ENCODE measurements at regions of chr2 and their contacts with region 1.

Region 1: DNA sequence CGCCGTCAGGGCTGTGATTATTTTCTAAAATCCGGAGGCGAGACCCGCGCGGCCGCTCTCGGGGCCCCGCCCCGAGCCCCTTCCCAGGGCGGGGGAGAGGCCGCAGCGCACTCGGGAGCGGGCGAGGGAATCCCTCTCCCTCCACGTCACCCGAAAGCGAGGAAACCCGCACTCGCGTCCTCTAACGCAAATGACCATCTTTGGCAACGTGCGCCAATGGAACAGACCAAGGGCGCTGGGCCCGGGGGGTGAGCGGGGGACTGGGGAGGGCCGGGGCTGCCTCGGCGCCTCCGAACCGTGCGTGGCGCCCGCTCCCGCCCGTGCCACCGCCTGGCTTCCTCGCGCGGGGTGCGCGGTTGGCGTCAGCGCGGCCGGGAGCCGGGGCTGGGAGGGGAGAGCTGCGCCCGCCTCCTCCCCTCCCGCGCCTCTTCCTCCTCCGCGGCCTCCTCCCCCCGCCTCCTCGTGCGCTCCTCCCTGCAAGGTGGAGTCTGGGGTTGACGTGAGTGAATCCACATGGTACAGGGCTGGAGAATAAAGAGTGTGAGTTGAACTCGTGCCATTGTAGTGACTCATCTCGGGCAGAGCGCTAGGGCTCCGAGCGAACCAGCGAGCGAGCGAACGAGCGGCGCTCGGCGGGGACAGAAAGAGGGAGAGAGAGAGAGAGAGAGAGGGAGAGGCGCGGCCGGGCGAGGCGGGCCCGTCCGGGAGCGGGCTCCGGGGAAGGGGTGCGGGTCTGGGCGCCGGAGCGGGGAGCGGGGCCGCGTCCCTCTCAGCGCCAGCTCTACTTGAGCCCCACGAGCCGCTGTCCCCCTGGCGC is at the start of gene FOSL2:
- DNase-seq: peak; percentile 99
- H3K4me3 ChIP-seq: peak within 1 kb of the TSS; percentile 74
- H3K27ac ChIP-seq: peak within 1 kb of the TSS; percentile 89
- H3K4me1 ChIP-seq: peaks cover 23% of the 10 kb centered on the region
- H3K27me3 ChIP-seq: no peaks in the 10 kb centered on the region
- CTCF ChIP-seq: no peak
- total RNA-seq, gene FOSL2: 5.3 and 12.2 TPM in 2 replicates

Region 2: GRCh38 chr2:27703638-27704341 is 688.7 kb before region 1 on chr2:
- CTCF ChIA-PET with region 1: no interaction called
- POLR2A ChIA-PET with region 1: no interaction called
- intact Hi-C with region 1: loop called (anchors 5 kb)
- DNase-seq: peak; percentile 88
- H3K4me3 ChIP-seq: no peak overlapping the region
- H3K27ac ChIP-seq: no peak overlapping the region
- H3K4me1 ChIP-seq: no peaks in the 10 kb centered on the region
- H3K27me3 ChIP-seq: no peaks in the 10 kb centered on the region
- CTCF ChIP-seq: peak; percentile 96

Region 3: GRCh38 chr2:27754138-27754588 is 638.3 kb before region 1 on chr2:
- CTCF ChIA-PET with region 1: interaction called, 4 read pairs
- POLR2A ChIA-PET with region 1: no interaction called
- intact Hi-C with region 1: loop called (anchors 1 kb)
- DNase-seq: peak; percentile 79
- H3K4me3 ChIP-seq: no peak overlapping the region
- H3K27ac ChIP-seq: no peak overlapping the region
- H3K4me1 ChIP-seq: no peaks in the 10 kb centered on the region
- H3K27me3 ChIP-seq: no peaks in the 10 kb centered on the region
- CTCF ChIP-seq: peak; percentile 94

Region 4: DNA sequence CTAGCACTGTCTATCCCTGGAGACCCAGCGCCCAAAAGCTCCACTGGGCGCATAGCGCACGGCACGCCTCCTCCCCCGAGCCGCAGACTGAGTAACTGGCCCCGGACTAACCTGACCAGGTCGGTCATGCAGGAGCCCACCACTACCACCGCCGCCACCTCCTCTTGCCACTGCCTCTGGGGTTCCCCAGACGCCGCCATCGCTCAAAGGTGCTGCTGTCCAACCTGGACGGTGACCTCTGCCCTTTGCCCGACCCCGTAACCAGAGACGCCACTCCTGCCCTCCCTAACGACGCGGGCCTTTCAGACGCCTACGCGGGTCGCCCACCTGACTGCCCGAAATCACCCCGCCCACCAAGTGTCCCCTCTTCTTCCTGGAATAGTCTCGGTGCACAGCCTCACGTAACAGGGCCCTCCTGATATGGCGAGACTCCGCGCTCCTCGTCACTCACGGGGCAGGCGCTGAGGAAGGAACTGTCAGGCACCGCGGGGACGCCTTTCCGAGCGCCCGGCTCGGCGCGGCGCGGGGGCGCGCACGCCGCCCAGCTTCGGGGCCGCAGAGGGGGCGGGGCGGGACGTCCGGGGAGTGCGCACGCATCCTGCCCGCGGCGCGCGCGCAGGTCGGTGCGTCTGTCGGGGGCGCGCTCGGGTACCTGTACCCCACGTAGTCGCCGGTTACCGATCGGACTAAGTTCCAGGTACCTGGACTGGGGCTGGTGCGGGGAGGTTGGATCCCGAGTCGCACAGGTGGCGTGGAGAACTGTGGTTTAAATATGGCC is 502.2 kb before region 1 on chr2 and contains the starts of genes BABAM2 and RBKS:
- CTCF ChIA-PET with region 1: no interaction called
- POLR2A ChIA-PET with region 1: no interaction called
- intact Hi-C with region 1: loop called (anchors 5 kb)
- DNase-seq: peak; percentile 93
- H3K4me3 ChIP-seq: peak within 1 kb of the TSS; percentile 63
- H3K27ac ChIP-seq: peak within 1 kb of the TSS; percentile 75
- H3K4me1 ChIP-seq: peaks cover 8% of the 10 kb centered on the region
- H3K27me3 ChIP-seq: no peaks in the 10 kb centered on the region
- CTCF ChIP-seq: no peak
- total RNA-seq, gene BABAM2: 21.5 and 21.8 TPM in 2 replicates
- total RNA-seq, gene RBKS: 0.54 and 0.66 TPM in 2 replicates

Region 5: GRCh38 chr2:27954771-27955383 is 437.6 kb before region 1 on chr2:
- CTCF ChIA-PET with region 1: no interaction called
- POLR2A ChIA-PET with region 1: no interaction called
- intact Hi-C with region 1: loop called (anchors 10 kb)
- DNase-seq: peak; percentile 82
- H3K4me3 ChIP-seq: no peak overlapping the region
- H3K27ac ChIP-seq: peak overlapping the region; percentile 77
- H3K4me1 ChIP-seq: peaks cover 37% of the 10 kb centered on the region
- H3K27me3 ChIP-seq: no peaks in the 10 kb centered on the region
- CTCF ChIP-seq: peak; percentile 56

Region 6: GRCh38 chr2:28155627-28156026 is 236.9 kb before region 1 on chr2:
- CTCF ChIA-PET with region 1: no interaction called
- POLR2A ChIA-PET with region 1: no interaction called
- intact Hi-C with region 1: loop called (anchors 2 kb)
- DNase-seq: peak; percentile 42
- H3K4me3 ChIP-seq: no peak overlapping the region
- H3K27ac ChIP-seq: no peak overlapping the region
- H3K4me1 ChIP-seq: no peaks in the 10 kb centered on the region
- H3K27me3 ChIP-seq: no peaks in the 10 kb centered on the region
- CTCF ChIP-seq: peak; percentile 66

Region 7: GRCh38 chr2:28276076-28276618 is 116.4 kb before region 1 on chr2:
- CTCF ChIA-PET with region 1: interaction called, 3 read pairs
- POLR2A ChIA-PET with region 1: no interaction called
- intact Hi-C with region 1: loop called (anchors 5 kb)
- DNase-seq: peak; percentile 82
- H3K4me3 ChIP-seq: no peak overlapping the region
- H3K27ac ChIP-seq: peak overlapping the region; percentile 81
- H3K4me1 ChIP-seq: peaks cover 41% of the 10 kb centered on the region
- H3K27me3 ChIP-seq: no peaks in the 10 kb centered on the region
- CTCF ChIP-seq: no peak